ENCODE measurements at regions of chr3 and their contacts with region 1.

Region 1: GRCh38 chr3:54433846-54434245 is 311.5 kb downstream of the CACNA2D3 start:
- DNase-seq: no peak
- ATAC-seq: no peak
- H3K4me3 ChIP-seq: no peak overlapping the region
- H3K27ac ChIP-seq: no peak overlapping the region
- H3K4me1 ChIP-seq: no peaks in the 10 kb centered on the region
- H3K27me3 ChIP-seq: no peaks in the 10 kb centered on the region
- CTCF ChIP-seq: no peak
- POLR2A ChIP-seq: no peak
- RAD21 ChIP-seq: no peak

Region 2: GRCh38 chr3:56303487-56303886 is 1869.6 kb after region 1 on chr3:
- CTCF ChIA-PET with region 1: no interaction called
- POLR2A ChIA-PET with region 1: no interaction called
- dilution Hi-C with region 1: no loop called
- in situ Hi-C with region 1: no loop called
- intact Hi-C with region 1: loop called (anchors 5 kb)
- DNase-seq: peak; percentile 36
- ATAC-seq: peak; percentile 89
- H3K4me3 ChIP-seq: no peak overlapping the region
- H3K27ac ChIP-seq: no peak overlapping the region
- H3K4me1 ChIP-seq: no peaks in the 10 kb centered on the region
- H3K27me3 ChIP-seq: no peaks in the 10 kb centered on the region
- CTCF ChIP-seq: peak; percentile 48
- POLR2A ChIP-seq: no peak
- RAD21 ChIP-seq: peak; percentile 41

Measured in IMR-90 (cell line).